Heart right ventricle (tissue), 16 donors: ENCODE measurements at regions of chr15 and their contacts with region 1.

Region 1: DNA sequence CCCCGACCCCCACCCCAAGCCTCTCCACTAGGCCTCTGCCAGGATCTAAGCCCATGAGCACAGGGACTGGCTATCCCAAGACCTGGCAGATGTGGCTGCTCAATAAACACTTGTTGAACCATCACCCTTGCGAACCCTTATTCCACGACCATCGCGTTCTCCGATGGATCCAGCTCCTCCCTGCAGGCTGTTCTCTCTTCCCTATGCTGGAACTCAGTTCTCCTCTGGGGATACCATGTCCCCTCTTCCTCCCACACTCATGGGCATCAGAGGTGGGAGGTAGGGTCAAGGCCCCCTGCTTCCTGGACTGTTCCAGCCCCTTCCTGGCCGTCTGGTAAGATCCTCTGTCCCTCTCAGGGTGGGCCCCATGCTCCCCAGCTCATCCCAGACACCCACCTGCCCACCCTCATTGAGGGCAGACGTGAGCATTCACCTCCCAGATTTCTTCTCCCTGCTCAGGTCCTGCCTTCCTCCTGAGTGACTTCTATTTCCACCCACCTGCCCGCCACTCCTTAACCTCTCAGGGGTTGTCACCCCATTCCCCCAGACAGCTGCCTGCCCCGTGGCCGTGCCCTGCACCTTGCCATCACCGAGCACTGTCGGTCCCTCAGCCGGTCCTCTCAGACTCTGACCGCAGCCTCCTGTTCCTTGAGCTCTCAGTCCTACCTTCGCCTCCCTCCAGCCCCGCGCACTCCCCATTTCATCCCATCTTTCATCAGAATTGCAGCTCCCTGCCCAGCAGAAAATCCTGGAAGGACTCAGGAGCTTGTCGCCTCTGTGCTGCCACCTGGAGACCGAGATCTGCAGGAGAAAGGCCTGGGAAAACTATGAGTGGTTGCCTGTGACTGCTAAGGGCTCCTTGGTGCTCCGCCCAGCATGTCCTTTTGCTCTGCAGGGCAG is 42.0 kb downstream of the PML start:
- DNase-seq: peak; percentile 39 to 60
- ATAC-seq: peak; percentile 7 to 32 (median 24)
- H3K4me3 ChIP-seq: no peak overlapping the region
- H3K27ac ChIP-seq: peak overlapping the region in 2 of 10 donors; percentile 11 to 16
- H3K4me1 ChIP-seq: peaks cover 9 to 61% (median 42%) of the 10 kb centered on the region in 9 donors
- H3K27me3 ChIP-seq: no peaks in the 10 kb centered on the region
- CTCF ChIP-seq: peak in 8 of 9 donors; percentile 23 to 68 (median 56)

Region 2: DNA sequence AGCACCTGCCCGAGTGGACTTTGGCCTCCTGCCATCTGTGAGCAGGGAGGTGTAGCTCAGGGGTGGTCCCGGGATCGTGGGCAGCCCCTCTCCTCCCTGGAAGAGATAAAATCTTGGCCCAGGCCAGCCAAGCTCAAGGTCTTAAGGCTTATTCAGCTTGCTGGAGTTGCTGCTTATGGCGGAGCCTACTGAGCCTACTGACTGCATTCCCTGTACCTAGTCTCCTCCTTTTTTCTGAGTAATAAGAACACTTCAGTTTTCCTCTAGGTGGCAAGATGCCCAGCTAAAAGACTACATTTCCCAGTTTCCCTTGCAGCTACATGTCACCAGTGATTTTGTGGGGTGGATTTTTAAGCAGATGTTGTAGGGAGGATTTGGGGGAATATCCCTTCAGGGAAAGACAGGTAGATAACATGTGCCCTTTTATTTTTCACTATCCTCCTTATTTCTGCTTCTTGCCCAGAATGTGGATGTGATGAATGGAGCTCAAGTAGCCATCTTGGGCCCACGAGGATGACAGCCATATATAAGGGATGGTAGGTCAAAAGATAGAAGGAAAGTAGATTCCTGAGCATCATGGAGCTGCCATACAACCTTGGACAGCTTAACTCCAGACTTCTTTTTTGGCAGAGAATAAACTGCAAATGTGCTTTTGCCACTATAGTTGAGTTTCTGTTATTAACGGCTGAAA is 241.9 kb before region 1 on chr15:
- intact Hi-C with region 1: no loop called
- DNase-seq: no peak
- ATAC-seq: no peak
- H3K4me3 ChIP-seq: no peak overlapping the region
- H3K27ac ChIP-seq: no peak overlapping the region
- H3K4me1 ChIP-seq: peaks cover 0 to 35% (median 7%) of the 10 kb centered on the region in 9 donors
- H3K27me3 ChIP-seq: no peaks in the 10 kb centered on the region
- CTCF ChIP-seq: no peak

Region 3: DNA sequence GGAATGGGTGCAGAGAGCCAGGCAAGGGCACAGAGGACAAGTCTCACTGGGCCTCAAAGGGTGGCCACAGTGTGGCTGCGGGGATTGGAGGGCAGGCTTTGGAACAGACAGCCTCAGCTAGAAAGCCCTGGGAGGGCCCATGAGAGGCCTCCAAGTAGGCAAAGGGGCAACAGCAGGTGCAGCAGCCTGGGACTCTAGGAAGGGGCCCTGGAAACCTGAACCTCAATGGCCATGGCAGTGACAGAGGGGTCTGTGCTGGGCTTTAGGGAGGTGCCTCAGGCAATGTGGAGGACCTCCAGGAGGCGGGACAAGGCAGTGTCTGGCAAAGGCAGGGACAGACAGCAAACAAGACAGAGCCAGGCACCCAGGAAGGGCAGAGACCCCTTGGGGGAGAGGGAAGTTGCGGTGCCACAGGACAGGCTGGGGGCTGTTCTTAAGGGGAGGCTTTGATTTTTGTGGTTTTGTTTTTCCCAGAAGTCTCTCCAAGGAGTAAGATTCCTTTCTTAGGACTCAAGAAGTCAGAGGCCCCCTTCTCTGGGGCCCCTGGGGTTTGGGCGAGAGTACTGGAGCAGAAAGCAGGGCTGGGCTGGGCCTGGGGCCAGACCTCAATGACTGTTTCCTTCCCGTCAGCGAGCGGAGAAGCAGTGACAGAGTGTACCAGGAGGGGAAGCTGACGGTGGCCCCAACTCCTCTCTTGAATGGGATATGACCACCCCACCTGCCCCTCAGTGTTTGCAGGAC is 54.1 kb before region 1 on chr15:
- intact Hi-C with region 1: loop called in 2 of 10 experiments (anchors 5 kb)
- DNase-seq: peak; percentile 87 to 89
- ATAC-seq: peak; percentile 85 to 95 (median 92)
- H3K4me3 ChIP-seq: peak overlapping the region in 4 of 10 donors; percentile 12 to 32 (median 26)
- H3K27ac ChIP-seq: peak overlapping the region; percentile 88 to 100 (median 98)
- H3K4me1 ChIP-seq: peaks cover 52 to 78% (median 66%) of the 10 kb centered on the region in 9 donors
- H3K27me3 ChIP-seq: no peaks in the 10 kb centered on the region
- CTCF ChIP-seq: peak in 1 of 9 donors; percentile 21

Region 4: DNA sequence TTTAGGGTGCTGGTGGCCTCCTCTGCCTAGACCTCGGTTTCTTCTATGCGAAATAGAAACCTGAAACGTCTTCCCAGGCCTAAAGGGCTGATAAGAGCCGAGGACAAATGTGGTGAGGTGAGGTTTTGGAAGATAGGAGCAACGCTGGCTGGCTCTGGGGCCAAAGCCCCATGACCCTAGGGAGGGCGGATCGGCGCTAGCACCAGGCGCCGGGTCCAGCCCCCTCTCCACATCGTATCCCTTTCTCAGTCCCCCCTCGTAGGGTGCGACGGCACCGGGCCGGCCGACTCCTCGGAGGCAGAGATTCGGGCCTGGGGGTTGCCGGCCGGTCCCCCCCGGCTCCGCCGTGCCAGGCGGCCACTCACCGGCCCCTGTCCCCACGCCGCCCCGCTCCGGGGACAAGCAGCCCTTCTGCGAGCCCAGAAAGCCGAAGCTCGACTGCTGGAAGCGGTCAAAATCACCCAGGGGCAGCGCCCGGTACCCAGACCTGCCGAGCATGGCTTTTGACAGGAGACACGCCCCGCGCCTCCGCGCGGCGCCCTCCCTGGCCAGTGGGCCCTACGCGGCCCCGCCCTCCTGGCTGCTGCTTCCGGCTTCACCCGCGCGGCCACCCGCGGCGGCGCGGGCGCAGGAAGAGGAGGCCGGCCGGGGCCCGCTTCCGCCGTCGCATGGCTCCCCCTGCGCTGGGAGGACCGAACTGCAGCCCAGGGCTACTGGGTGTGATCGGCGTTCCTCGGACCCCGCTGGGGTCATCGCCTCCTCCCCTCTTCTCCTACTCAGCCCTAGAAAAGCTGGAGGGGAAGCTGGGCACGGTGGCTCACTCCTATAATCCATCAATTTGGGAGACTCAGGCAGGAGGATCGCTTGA is 44.6 kb before region 1 on chr15 and contains the start of gene STOML1:
- intact Hi-C with region 1: loop called in 3 of 10 experiments (anchors 5 to 10 kb)
- DNase-seq: peak; percentile 91 to 96
- ATAC-seq: peak; percentile 80 to 92 (median 87)
- H3K4me3 ChIP-seq: peak within 1 kb of the TSS; percentile 70 to 96 (median 88)
- H3K27ac ChIP-seq: peak within 1 kb of the TSS; percentile 92 to 100 (median 99)
- H3K4me1 ChIP-seq: peaks cover 42 to 88% (median 83%) of the 10 kb centered on the region in 9 donors
- H3K27me3 ChIP-seq: no peaks in the 10 kb centered on the region
- CTCF ChIP-seq: peak; percentile 87 to 99 (median 97)
- total RNA-seq, gene STOML1: 21.1 to 38.4 (median 27.2) TPM